ENCODE measurements at regions of chr1 and their contacts with region 1.

Region 1: GRCh38 chr1:184386312-184387068 is at the start of gene C1orf21:
- DNase-seq: no peak
- H3K4me3 ChIP-seq: peak within 1 kb of the TSS; percentile 68 to 95
- H3K27ac ChIP-seq: peak within 1 kb of the TSS; percentile 95
- H3K4me1 ChIP-seq: peaks cover 39% of the 10 kb centered on the region
- H3K27me3 ChIP-seq: no peaks in the 10 kb centered on the region
- CTCF ChIP-seq: no peak
- POLR2A ChIP-seq: peak in 1 of 2 donors; percentile 94
- total RNA-seq, gene C1orf21: 24.1 TPM

Region 2: GRCh38 chr1:184362668-184363279 is 23.7 kb before region 1 on chr1:
- intact Hi-C with region 1: no loop called
- DNase-seq: no peak
- H3K4me3 ChIP-seq: no peak overlapping the region
- H3K27ac ChIP-seq: peak overlapping the region; percentile 9
- H3K4me1 ChIP-seq: peaks cover 14% of the 10 kb centered on the region
- H3K27me3 ChIP-seq: no peaks in the 10 kb centered on the region
- CTCF ChIP-seq: no peak
- POLR2A ChIP-seq: no peak

Region 3: DNA sequence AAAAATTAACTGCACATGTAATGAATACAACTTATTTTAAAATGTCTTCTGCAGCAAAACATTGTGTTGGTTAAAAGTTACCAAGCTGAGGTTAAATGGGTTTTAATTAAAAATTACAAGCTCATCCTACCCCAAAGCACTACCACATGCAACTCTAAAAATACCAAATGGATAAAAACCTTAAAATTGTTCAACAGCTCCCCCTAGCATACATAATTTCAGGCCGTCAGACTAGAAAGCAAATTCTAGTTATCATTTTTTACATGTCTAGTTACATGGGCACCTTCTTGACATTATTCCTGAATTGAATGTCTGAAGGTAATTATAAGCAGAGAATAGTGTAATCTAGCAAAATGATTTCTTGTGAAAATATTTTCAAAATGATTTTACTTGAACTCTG is 176.8 kb after region 1 on chr1:
- intact Hi-C with region 1: loop called (anchors 5 kb)
- DNase-seq: no peak
- H3K4me3 ChIP-seq: no peak overlapping the region
- H3K27ac ChIP-seq: peak overlapping the region; percentile 80
- H3K4me1 ChIP-seq: peaks cover 34% of the 10 kb centered on the region
- H3K27me3 ChIP-seq: no peaks in the 10 kb centered on the region
- CTCF ChIP-seq: peak; percentile 26 to 33 (median 28)
- POLR2A ChIP-seq: no peak

Region 4: GRCh38 chr1:185156854-185157598 is 770.5 kb after region 1 on chr1 and contains the starts of genes SWT1 and TRMT1L:
- intact Hi-C with region 1: loop called (anchors 10 kb)
- DNase-seq: peak; percentile 99 to 100
- H3K4me3 ChIP-seq: peak within 1 kb of the TSS; percentile 96 to 98
- H3K27ac ChIP-seq: peak within 1 kb of the TSS; percentile 99
- H3K4me1 ChIP-seq: peaks cover 41% of the 10 kb centered on the region
- H3K27me3 ChIP-seq: no peaks in the 10 kb centered on the region
- CTCF ChIP-seq: no peak
- POLR2A ChIP-seq: peak; percentile 62 to 98
- total RNA-seq, gene SWT1: 6.9 TPM
- total RNA-seq, gene TRMT1L: 23.1 TPM

Measured in vagina (tissue), 2 donors.